ENCODE measurements at regions of chr1 and their contacts with region 1.

Region 1: DNA sequence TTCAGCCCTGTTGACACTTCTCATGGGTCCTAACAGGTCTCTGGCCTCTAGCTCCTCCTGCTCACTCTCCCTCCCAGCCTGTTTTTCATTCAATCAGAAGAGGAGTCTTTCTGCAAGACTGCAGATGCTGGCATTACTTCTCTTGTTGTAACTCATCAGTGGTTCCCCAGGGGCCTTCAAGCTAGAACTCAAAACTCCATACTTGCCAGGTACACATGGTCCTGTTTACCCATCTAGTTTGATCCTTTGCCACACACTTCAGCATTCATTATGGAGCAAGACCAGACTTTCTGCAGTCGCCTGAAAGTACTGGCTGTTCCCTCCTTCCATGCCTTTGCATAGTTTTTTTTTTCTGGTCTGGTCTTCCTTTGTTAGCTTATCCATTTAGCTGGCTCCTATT is 47.9 kb downstream of the SERBP1 start:
- DNase-seq: no peak

Region 2: DNA sequence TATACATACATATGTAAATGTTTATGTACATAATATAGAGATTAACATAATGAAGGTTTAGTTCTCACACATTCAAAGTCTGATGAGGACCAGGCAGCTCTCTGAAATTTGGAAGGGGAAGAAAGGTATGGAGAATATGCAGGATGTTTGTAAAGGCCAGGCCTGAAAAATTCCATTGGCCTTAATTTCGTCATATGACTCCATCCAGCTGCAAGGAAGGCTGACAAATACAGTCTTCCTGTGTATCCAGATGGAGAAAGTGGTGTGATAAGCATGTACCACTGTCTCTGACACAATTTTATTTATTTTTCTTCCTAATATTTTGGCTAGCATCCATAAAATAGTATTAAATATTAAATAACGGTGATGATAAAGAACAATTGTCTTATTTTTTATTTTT is 854.6 kb before region 1 on chr1:
- intact Hi-C with region 1: loop called in 1 of 2 experiments (anchors 5 kb)
- DNase-seq: no peak

Region 3: DNA sequence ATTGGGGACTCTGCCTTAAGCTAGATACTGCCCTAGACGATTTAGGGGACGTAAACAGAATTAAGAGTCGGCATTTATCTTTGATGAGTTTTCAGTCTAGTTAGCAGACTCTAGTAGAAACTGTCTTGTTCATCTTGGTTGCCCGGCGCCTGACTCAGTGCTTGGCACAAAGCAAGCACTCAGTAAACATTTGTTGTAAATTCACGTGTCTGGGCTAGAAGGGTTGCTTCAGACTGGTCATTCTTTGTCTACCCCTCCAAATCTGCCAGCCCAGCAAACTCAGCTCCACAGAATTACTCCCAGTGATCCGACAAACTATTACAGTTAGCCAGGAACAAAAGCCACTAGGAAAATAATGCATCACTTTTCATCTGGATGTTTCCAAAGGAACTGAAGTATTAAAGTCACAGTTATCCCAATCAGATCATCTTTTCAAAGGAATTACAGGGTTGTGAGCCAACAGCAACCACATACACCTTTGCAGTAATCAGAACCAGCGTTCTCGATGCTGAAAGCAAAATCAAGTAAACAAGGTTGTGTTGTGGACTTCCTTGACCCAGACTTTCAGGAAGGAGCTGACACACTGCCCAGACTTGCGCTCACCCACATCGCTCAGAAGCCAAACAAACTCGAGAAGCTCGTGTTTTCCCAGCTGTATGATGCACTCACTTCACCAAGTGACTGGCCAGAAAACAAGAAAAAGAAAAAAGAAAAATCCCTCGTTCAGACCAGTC is 236.2 kb after region 1 on chr1:
- intact Hi-C with region 1: no loop called
- DNase-seq: peak; percentile 89

Measured in posterior vena cava (tissue), 2 donors.